Activated T-helper 1 cell treated with anti-CD3 and anti-CD28 coated beads, Interleukin-12 subunit alpha, Interleukin-12 subunit beta, Interleukin-2, Interleukin-4 antibody, amounts not matched to agents 30 ng/mL and 10 ng/mL and 1 ng/mL, durations not matched to agents 14 hours and 24 hours and 36 hours (primary cell): ENCODE measurements at regions of chr2 and their contacts with region 1.

Region 1: GRCh38 chr2:111049792-111050640 is 70.7 kb upstream of the BCL2L11 start:
- DNase-seq: no peak
- H3K4me3 Mint-ChIP-seq: peak overlapping the region; percentile 24
- H3K27ac Mint-ChIP-seq: peak overlapping the region; percentile 82
- H3K4me1 Mint-ChIP-seq: peaks cover 48% of the 10 kb centered on the region
- H3K27me3 Mint-ChIP-seq: peaks cover 9% of the 10 kb centered on the region

Region 2: DNA sequence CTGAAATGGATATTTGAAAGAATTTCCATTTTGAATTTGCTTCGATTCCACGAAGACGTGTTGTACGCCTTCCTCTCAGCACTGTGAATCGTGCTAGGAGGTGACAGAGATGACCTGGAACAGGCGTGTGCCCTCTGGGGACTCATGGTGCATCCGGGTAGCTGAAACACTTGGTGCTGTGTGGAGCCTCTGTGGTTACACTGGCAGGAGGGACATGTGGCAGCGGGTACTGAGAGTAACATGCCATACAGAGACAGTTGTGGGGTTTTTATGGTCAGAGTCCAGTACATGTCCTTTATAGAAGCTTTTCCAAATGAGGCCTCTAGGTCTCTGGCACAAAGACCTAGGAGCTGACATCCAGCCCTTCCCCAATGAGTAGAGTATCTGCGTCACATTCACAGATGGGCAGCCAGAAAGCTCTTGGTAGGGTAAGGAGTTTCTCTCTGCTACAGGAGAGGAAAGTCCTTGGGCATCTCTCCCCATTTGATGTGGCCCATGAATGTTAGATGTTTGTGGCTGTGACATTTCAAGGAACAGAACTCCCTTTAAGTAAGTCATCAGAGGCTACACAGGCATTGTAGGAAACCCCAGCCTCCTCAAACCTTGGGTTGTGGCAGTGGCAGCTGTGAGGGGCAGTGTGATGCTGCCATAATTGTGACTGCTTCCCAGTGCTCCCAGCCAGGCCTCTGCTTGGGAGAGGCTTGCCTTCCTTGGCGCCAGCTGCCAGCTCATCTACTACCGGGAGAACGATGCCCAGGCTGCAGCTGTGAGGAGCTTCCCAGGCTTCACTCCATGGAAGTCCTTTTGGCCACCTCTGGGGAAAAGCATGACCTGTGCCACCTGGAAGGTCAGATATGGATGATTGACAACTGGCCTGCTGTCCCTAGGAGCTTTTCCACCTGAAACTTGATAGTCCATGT is 237.0 kb before region 1 on chr2:
- intact Hi-C with region 1: loop called (anchors 2 kb)
- DNase-seq: no peak
- H3K4me3 Mint-ChIP-seq: no peak overlapping the region
- H3K27ac Mint-ChIP-seq: no peak overlapping the region
- H3K4me1 Mint-ChIP-seq: peaks cover 32% of the 10 kb centered on the region
- H3K27me3 Mint-ChIP-seq: peaks cover 35% of the 10 kb centered on the region

Region 3: GRCh38 chr2:111035830-111036441 is 14.1 kb before region 1 on chr2:
- intact Hi-C with region 1: loop called (anchors 1 kb)
- DNase-seq: no peak
- H3K4me3 Mint-ChIP-seq: no peak overlapping the region
- H3K27ac Mint-ChIP-seq: no peak overlapping the region
- H3K4me1 Mint-ChIP-seq: peaks cover 32% of the 10 kb centered on the region
- H3K27me3 Mint-ChIP-seq: peaks cover 55% of the 10 kb centered on the region

Region 4: GRCh38 chr2:111071600-111072171 is 21.7 kb after region 1 on chr2:
- intact Hi-C with region 1: no loop called
- DNase-seq: no peak
- H3K4me3 Mint-ChIP-seq: no peak overlapping the region
- H3K27ac Mint-ChIP-seq: no peak overlapping the region
- H3K4me1 Mint-ChIP-seq: no peaks in the 10 kb centered on the region
- H3K27me3 Mint-ChIP-seq: peaks cover 43% of the 10 kb centered on the region

Region 5: GRCh38 chr2:111091811-111092211 is 41.8 kb after region 1 on chr2:
- intact Hi-C with region 1: loop called (anchors 1 kb)
- DNase-seq: no peak
- H3K4me3 Mint-ChIP-seq: no peak overlapping the region
- H3K27ac Mint-ChIP-seq: no peak overlapping the region
- H3K4me1 Mint-ChIP-seq: peaks cover 14% of the 10 kb centered on the region
- H3K27me3 Mint-ChIP-seq: peaks cover 61% of the 10 kb centered on the region